WTC11 (cell line): ENCODE measurements at regions of chr10 and their contacts with region 1.

Region 1: GRCh38 chr10:78972947-78973900 is 95.5 kb upstream of the ZMIZ1 start:
- DNase-seq: peak; percentile 71
- ATAC-seq: peak; percentile 35
- H3K4me3 Mint-ChIP-seq: peak overlapping the region; percentile 68
- H3K27ac Mint-ChIP-seq: peak overlapping the region; percentile 58
- H3K4me1 Mint-ChIP-seq: peaks cover 38% of the 10 kb centered on the region
- H3K27me3 Mint-ChIP-seq: no peaks in the 10 kb centered on the region; the same call in 1 of the 2 replicates
- CTCF ChIP-seq: no peak

Region 2: GRCh38 chr10:78960316-78960800 is 12.9 kb before region 1 on chr10:
- CTCF ChIA-PET with region 1: interaction called, 51 read pairs
- POLR2A ChIA-PET with region 1: interaction called, 8 read pairs
- DNase-seq: no peak
- ATAC-seq: no peak
- H3K4me3 Mint-ChIP-seq: no peak overlapping the region
- H3K27ac Mint-ChIP-seq: no peak overlapping the region
- H3K4me1 Mint-ChIP-seq: peaks cover 36% of the 10 kb centered on the region
- H3K27me3 Mint-ChIP-seq: no peaks in the 10 kb centered on the region
- CTCF ChIP-seq: no peak

Region 3: DNA sequence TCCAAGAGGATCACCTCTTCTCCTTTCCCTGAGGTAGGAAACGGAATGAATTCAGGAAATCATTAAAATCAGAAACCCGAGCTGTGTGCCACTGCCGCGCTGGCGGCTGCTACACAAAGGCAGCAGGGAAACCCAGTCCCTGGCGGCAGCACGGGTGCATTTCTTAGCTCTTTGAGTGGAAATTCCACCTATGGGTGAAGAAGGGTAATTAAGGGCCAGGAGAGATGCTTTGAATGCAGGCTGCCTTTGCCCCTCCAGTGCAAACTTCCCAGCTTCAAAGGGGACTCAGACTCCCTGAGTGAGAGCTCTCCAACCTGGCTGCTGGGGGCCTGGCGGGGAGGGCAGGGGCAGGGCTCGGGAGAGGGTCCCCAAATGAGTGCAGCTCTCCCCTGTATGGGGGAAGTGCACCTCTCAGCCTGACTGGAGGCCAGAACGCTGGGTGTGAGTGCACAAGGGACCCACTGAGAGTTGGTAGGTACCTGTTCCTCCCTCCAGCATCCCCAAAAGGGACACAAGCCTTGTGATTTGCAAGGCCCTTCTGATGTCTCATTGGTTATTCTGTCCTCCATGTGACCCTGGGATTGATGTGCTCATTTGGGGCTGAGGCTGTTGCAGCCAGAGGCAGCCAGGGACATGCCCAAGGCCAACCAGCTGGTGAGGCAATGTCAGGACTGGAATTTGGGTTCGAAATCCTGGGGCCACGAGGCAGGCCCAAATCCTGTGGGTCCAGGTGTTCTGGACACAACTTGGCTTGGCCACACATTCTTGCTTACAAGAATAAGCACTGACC is 79.3 kb after region 1 on chr10:
- CTCF ChIA-PET with region 1: interaction called, 15 read pairs
- POLR2A ChIA-PET with region 1: no interaction called
- DNase-seq: peak; percentile 23
- ATAC-seq: peak; percentile 46
- H3K4me3 Mint-ChIP-seq: no peak overlapping the region
- H3K27ac Mint-ChIP-seq: no peak overlapping the region
- H3K4me1 Mint-ChIP-seq: peaks cover 57% of the 10 kb centered on the region
- H3K27me3 Mint-ChIP-seq: peaks cover 14% of the 10 kb centered on the region
- CTCF ChIP-seq: no peak